Activated CD4-positive, alpha-beta T cell treated with anti-CD3 and anti-CD28 coated beads, Interleukin-2, amount 10 ng/mL, durations not matched to agents 24 days and 14 days (primary cell): ENCODE measurements at regions of chr1 and their contacts with region 1.

Region 1: GRCh38 chr1:6602669-6603237 is at the start of gene KLHL21:
- DNase-seq: peak; percentile 94
- H3K4me3 Mint-ChIP-seq: peak within 1 kb of the TSS; percentile 95
- H3K27ac Mint-ChIP-seq: peak within 1 kb of the TSS; percentile 95
- H3K4me1 Mint-ChIP-seq: peaks cover 26% of the 10 kb centered on the region
- H3K27me3 Mint-ChIP-seq: peaks cover 4% of the 10 kb centered on the region
- total RNA-seq, gene KLHL21: 26.1 and 26.8 TPM in 2 replicates

Region 2: DNA sequence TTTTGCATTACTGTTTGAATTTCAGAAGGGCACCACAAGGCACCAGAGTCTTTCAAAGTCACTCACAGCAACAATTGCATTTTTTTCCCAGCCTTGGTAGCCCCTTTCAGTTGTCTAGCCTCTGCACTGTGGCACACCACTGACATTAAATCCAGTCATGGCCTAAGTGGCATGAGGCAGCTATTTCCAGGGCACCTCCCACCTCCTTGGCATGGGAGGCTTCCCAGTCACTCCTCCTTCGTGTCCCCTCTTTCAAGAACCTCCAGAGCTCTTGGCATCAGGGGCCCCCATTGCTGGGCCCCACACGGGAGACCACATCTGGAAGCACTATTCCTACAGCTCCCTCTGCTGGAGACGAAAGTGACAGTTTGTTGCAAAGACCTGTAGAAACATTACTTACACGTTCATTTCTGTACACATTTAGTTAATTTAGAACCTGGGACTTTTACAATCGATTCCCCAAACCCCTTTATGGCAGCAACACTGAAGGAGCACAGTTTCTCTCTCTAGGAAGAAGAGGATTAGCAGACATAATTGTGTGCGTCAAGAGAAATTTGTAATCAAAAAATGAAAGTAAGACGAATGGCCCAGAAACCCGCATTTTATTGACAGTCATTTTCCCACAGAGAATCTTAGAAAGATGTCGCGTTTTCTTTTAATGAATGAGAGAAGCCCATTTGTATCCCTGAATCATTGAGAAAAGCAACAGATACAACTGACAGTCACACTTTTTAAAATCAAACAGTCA is 416.9 kb before region 1 on chr1:
- intact Hi-C with region 1: no loop called
- DNase-seq: peak; percentile 77
- H3K4me3 Mint-ChIP-seq: no peak overlapping the region
- H3K27ac Mint-ChIP-seq: no peak overlapping the region
- H3K4me1 Mint-ChIP-seq: peaks cover 23% of the 10 kb centered on the region
- H3K27me3 Mint-ChIP-seq: peaks cover 16% of the 10 kb centered on the region

Region 3: GRCh38 chr1:6393400-6394187 is 209.2 kb before region 1 on chr1 and contains the start of gene ACOT7:
- intact Hi-C with region 1: loop called (anchors 1 kb)
- DNase-seq: peak; percentile 97
- H3K4me3 Mint-ChIP-seq: peak within 1 kb of the TSS; percentile 93
- H3K27ac Mint-ChIP-seq: peak within 1 kb of the TSS; percentile 97
- H3K4me1 Mint-ChIP-seq: peaks cover 33% of the 10 kb centered on the region
- H3K27me3 Mint-ChIP-seq: no peaks in the 10 kb centered on the region
- total RNA-seq, gene ACOT7: 133 and 136 TPM in 2 replicates

Region 4: DNA sequence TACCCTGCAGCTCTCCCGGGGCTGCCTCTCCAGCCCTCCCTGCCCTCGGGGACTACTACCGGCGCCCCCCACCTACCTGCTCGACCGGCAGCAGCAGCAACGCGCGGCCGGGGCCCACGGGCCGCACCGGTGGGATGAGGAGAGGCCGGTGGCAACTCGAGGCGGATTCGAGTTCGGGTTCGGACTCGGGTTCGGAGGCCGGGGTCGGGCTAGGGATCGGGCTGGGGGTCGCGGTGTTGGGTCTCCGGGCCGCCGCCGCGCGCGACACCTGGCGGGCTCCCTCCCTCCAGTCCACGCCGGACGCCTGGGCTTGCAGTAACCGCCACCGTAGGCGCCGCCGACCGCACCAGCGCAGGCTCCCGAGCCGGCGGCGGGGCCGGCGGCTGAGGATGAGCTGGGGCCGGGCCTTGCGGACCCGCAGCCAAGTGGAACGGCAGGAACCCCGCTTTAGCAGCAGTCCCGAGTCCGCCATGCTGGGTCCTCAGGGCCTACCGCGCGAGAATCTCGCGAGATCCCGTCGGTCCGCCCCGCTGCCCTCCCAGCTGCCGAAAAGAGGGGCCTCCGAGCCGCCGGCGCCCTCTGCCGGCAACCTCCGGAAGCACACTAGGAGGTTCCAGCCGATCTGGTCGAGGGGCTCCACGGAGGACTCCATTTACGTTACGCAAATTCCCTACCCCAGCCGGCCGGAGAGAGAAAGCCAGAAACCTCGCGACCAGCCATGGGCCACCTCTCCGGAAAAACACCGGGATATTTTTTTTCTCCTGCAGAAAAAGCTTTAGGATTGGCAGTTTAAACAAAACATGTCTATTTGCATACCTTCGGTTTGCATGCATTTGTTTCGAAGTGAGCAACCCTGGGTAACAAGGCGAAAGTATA is 48.5 kb before region 1 on chr1 and contains the start of gene NOL9:
- intact Hi-C with region 1: loop called (anchors 1 kb)
- DNase-seq: peak; percentile 99
- H3K4me3 Mint-ChIP-seq: peak within 1 kb of the TSS; percentile 85
- H3K27ac Mint-ChIP-seq: peak within 1 kb of the TSS; percentile 75
- H3K4me1 Mint-ChIP-seq: peaks cover 16% of the 10 kb centered on the region
- H3K27me3 Mint-ChIP-seq: no peaks in the 10 kb centered on the region
- total RNA-seq, gene NOL9: 54.7 and 59.2 TPM in 2 replicates

Region 5: GRCh38 chr1:6613361-6614018 is 10.7 kb after region 1 on chr1 and contains the start of gene PHF13:
- intact Hi-C with region 1: loop called (anchors 1 kb)
- DNase-seq: peak; percentile 100
- H3K4me3 Mint-ChIP-seq: peak within 1 kb of the TSS; percentile 95
- H3K27ac Mint-ChIP-seq: peak within 1 kb of the TSS; percentile 85
- H3K4me1 Mint-ChIP-seq: peaks cover 21% of the 10 kb centered on the region
- H3K27me3 Mint-ChIP-seq: peaks cover 2% of the 10 kb centered on the region
- total RNA-seq, gene PHF13: 19.1 and 20.1 TPM in 2 replicates

Region 6: GRCh38 chr1:6753320-6754140 is 150.8 kb after region 1 on chr1:
- intact Hi-C with region 1: no loop called
- DNase-seq: no peak
- H3K4me3 Mint-ChIP-seq: no peak overlapping the region
- H3K27ac Mint-ChIP-seq: no peak overlapping the region
- H3K4me1 Mint-ChIP-seq: no peaks in the 10 kb centered on the region
- H3K27me3 Mint-ChIP-seq: peaks cover 35% of the 10 kb centered on the region

Region 7: GRCh38 chr1:6784560-6785317 is 182.0 kb after region 1 on chr1:
- intact Hi-C with region 1: loop called (anchors 2 kb)
- DNase-seq: peak; percentile 100
- H3K4me3 Mint-ChIP-seq: peak overlapping the region; percentile 88
- H3K27ac Mint-ChIP-seq: peak overlapping the region; percentile 91
- H3K4me1 Mint-ChIP-seq: peaks cover 32% of the 10 kb centered on the region
- H3K27me3 Mint-ChIP-seq: peaks cover 4% of the 10 kb centered on the region

Region 8: GRCh38 chr1:6819246-6820040 is 216.7 kb after region 1 on chr1:
- intact Hi-C with region 1: no loop called
- DNase-seq: no peak
- H3K4me3 Mint-ChIP-seq: no peak overlapping the region
- H3K27ac Mint-ChIP-seq: no peak overlapping the region
- H3K4me1 Mint-ChIP-seq: peaks cover 4% of the 10 kb centered on the region
- H3K27me3 Mint-ChIP-seq: no peaks in the 10 kb centered on the region